ENCODE measurements at regions of chr3 and their contacts with region 1.

Region 1: DNA sequence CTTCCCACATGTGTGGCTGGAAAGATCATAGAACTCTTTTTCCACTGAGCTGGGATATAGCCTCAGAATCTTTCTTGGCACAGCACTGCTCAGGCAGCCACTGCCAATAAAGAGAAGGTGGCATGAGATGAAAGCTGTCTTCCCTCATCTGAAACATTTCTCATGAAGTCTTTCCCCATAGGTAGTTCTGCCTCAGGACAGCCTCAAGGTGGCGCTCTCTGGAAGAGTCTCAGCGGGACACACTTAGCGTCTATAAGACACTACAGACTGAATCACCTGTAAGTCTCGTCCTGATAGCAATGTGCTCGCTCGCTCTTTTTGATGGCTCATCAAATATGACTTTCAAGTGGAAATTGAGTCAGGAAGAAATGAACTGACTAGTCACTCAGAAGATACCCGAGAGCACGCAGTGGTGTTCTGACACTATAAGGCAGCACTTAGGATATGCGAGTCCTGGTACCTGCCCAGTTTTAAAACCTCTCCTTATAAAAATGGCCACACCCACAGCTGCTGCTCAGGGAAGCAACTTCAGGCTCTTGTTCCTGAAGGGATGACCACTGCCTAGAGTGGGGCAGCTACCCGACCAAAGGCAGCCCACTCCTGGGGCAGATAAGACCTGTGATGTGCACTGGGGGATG is 269.5 kb downstream of the SUCLG2 start:
- DNase-seq: no peak
- ATAC-seq: no peak
- H3K4me3 Mint-ChIP-seq: no peak overlapping the region
- H3K27ac Mint-ChIP-seq: no peak overlapping the region
- H3K4me1 Mint-ChIP-seq: peaks cover 22% of the 10 kb centered on the region
- H3K27me3 Mint-ChIP-seq: no peaks in the 10 kb centered on the region
- CTCF ChIP-seq: no peak

Region 2: GRCh38 chr3:65497846-65498245 is 1887.0 kb before region 1 on chr3:
- CTCF ChIA-PET with region 1: no interaction called
- POLR2A ChIA-PET with region 1: no interaction called
- intact Hi-C with region 1: no loop called
- DNase-seq: no peak
- ATAC-seq: no peak
- H3K4me3 Mint-ChIP-seq: no peak overlapping the region
- H3K27ac Mint-ChIP-seq: no peak overlapping the region
- H3K4me1 Mint-ChIP-seq: no peaks in the 10 kb centered on the region
- H3K27me3 Mint-ChIP-seq: no peaks in the 10 kb centered on the region
- CTCF ChIP-seq: no peak

Region 3: GRCh38 chr3:67706934-67707333 is 322.1 kb after region 1 on chr3:
- CTCF ChIA-PET with region 1: interaction called, 7 read pairs
- POLR2A ChIA-PET with region 1: no interaction called
- intact Hi-C with region 1: loop called (anchors 5 kb)
- DNase-seq: no peak
- ATAC-seq: no peak
- H3K4me3 Mint-ChIP-seq: no peak overlapping the region
- H3K27ac Mint-ChIP-seq: no peak overlapping the region
- H3K4me1 Mint-ChIP-seq: peaks cover 8% of the 10 kb centered on the region
- H3K27me3 Mint-ChIP-seq: no peaks in the 10 kb centered on the region
- CTCF ChIP-seq: no peak

Region 4: DNA sequence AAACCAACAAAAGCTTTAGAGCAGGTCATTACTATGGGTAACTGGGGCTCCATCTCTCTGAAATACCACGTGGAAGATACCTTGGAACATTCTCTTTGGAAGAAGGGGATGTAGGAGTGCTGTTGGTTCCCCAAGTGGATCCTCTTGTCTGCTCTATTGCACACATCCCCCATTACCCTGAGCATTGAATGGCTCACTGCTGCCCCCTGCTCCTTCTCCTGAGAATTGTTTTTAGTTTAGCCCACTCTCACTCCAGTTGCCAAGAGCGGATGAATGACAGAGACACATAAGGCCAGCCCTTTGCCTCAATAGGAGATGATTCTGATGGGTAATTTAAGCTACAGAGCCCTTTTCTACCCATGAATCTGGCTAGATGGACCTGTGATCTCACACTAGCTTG is 405.2 kb after region 1 on chr3:
- CTCF ChIA-PET with region 1: interaction called, 43 read pairs
- POLR2A ChIA-PET with region 1: no interaction called
- intact Hi-C with region 1: no loop called
- DNase-seq: no peak
- ATAC-seq: peak; percentile 50
- H3K4me3 Mint-ChIP-seq: no peak overlapping the region
- H3K27ac Mint-ChIP-seq: no peak overlapping the region
- H3K4me1 Mint-ChIP-seq: no peaks in the 10 kb centered on the region
- H3K27me3 Mint-ChIP-seq: peaks cover 11% of the 10 kb centered on the region
- CTCF ChIP-seq: no peak

Region 5: DNA sequence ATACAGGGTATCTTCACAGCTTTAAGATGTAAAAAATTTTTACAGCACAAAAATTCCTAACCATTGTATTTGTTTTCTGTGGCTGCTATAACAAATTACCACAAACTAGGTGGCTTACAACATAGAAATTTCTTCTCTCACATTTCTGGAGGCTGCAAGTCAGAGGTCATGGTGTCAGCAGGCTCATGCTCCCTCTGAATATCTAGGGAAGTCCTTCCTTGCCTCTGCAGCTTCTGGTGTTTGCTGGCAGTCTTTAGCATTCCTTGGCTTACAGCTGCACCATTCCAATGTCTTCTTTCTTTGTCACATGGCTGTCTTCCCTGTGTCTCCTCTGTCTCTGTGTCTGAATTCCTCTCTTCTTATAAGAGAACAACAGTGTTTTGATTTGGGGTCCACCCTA is 579.7 kb after region 1 on chr3:
- CTCF ChIA-PET with region 1: no interaction called
- POLR2A ChIA-PET with region 1: no interaction called
- intact Hi-C with region 1: no loop called
- DNase-seq: no peak
- ATAC-seq: no peak
- H3K4me3 Mint-ChIP-seq: no peak overlapping the region
- H3K27ac Mint-ChIP-seq: no peak overlapping the region
- H3K4me1 Mint-ChIP-seq: no peaks in the 10 kb centered on the region
- H3K27me3 Mint-ChIP-seq: no peaks in the 10 kb centered on the region
- CTCF ChIP-seq: no peak

Region 6: DNA sequence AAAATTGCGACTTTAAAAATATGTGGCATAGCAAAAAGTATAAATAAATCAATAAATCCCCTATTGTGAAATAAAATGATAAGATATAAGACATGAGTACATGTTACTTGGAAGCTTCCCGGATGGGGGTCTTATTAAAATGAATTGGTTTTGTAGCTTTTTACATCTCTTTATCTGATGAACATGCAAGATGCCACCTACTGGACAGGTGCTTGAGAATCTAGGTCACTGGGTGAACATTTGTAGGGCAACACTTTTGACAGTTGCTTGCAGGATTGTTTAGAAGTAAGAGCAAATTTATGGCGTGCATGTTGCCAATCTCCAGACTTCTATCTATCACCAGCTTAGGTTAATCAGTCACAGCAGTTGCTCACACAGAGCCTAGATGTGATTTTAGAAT is 632.2 kb after region 1 on chr3:
- CTCF ChIA-PET with region 1: no interaction called
- POLR2A ChIA-PET with region 1: no interaction called
- intact Hi-C with region 1: loop called (anchors 5 kb)
- DNase-seq: no peak
- ATAC-seq: no peak
- H3K4me3 Mint-ChIP-seq: no peak overlapping the region
- H3K27ac Mint-ChIP-seq: no peak overlapping the region
- H3K4me1 Mint-ChIP-seq: no peaks in the 10 kb centered on the region
- H3K27me3 Mint-ChIP-seq: no peaks in the 10 kb centered on the region
- CTCF ChIP-seq: no peak

Region 7: DNA sequence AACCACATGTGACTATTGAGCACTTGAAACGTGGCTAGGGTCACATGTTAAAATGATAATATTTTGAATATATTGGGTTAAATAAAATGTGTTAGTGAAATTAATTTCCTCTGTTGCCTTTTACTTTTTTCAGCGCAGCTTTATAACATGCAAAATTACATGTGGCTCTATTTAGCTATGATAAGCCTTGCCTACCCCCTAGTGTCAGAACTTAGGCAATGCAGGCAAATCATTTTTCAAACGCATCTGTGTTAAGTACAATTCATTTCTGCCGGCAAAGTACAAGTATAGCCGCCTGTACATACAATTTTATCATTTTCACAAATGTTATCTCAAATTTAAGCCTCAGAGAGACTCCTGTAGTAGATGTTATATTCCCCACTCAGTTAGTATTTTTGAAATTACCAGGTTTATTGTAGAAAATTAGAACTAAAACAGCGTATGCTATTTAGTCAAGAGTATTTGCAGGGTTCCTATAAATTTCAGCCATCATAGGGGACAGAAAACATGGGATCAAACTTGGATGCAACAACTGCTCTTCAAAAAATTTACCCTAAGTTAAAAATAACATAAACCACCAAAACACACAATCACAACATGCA is 1491.3 kb after region 1 on chr3:
- CTCF ChIA-PET with region 1: interaction called, 3 read pairs
- POLR2A ChIA-PET with region 1: no interaction called
- intact Hi-C with region 1: loop called (anchors 2 kb)
- DNase-seq: no peak
- ATAC-seq: peak; percentile 69
- H3K4me3 Mint-ChIP-seq: no peak overlapping the region
- H3K27ac Mint-ChIP-seq: no peak overlapping the region
- H3K4me1 Mint-ChIP-seq: no peaks in the 10 kb centered on the region
- H3K27me3 Mint-ChIP-seq: peaks cover 23% of the 10 kb centered on the region
- CTCF ChIP-seq: peak; percentile 32

Region 8: GRCh38 chr3:68893600-68894239 is 1508.8 kb after region 1 on chr3:
- CTCF ChIA-PET with region 1: interaction called, 3 read pairs
- POLR2A ChIA-PET with region 1: no interaction called
- intact Hi-C with region 1: loop called (anchors 5 kb)
- DNase-seq: no peak
- ATAC-seq: no peak
- H3K4me3 Mint-ChIP-seq: no peak overlapping the region
- H3K27ac Mint-ChIP-seq: no peak overlapping the region
- H3K4me1 Mint-ChIP-seq: no peaks in the 10 kb centered on the region
- H3K27me3 Mint-ChIP-seq: peaks cover 5% of the 10 kb centered on the region
- CTCF ChIP-seq: no peak

Measured in activated B cell treated with CpG ODN at 0.5 μM for 24 hours (primary cell).